Left cardiac atrium (tissue), 4 donors: ENCODE measurements at regions of chr4 and their contacts with region 1.

Region 1: GRCh38 chr4:140153718-140154571 is at the start of gene MAML3:
- DNase-seq: peak; percentile 96
- ATAC-seq: peak; percentile 62 to 63
- total RNA-seq, gene MAML3: 2.6 to 3.0 TPM

Region 2: DNA sequence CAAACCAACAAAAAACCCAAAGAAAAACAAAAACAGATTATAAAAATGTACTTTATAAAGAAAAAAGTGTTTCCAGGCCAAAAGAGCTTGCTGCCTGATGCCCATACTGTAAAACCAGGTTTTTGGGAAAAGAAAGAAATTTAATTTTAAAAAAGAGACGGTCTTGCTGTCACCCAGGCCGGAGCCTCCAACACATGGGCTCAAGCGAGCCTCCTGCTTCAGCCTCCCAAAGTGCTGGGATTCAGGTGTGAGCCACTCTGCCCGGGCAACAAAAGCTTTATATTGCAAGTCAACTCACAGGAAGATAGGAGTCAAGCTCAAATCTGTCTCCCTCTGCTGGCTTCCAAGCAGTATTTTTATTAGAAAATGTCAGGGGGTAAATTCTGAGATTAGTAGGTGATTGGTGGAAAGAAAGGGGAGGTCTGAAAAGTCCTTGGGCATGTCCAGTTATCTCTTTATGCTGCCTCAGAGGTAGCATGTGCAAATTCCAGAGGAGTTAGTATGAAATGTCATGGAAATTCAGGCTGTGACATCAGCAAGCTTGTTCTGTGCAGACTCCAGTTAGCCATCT is 448.9 kb before region 1 on chr4:
- intact Hi-C with region 1: no loop called
- DNase-seq: no peak
- ATAC-seq: no peak

Region 3: GRCh38 chr4:140049024-140049848 is 104.7 kb before region 1 on chr4:
- intact Hi-C with region 1: loop called (anchors 5 to 10 kb)
- DNase-seq: peak; percentile 33
- ATAC-seq: peak; percentile 82 to 83

Region 4: GRCh38 chr4:140109737-140110136 is 44.2 kb before region 1 on chr4:
- intact Hi-C with region 1: loop called in 1 of 2 experiments (anchors 5 kb)
- DNase-seq: no peak
- ATAC-seq: no peak

Region 5: GRCh38 chr4:140326395-140326993 is 172.5 kb after region 1 on chr4:
- intact Hi-C with region 1: loop called in 1 of 2 experiments (anchors 10 kb)
- DNase-seq: peak; percentile 23
- ATAC-seq: peak; percentile 73 to 82